ENCODE measurements at regions of chr9 and their contacts with region 1.

Region 1: GRCh38 chr9:78035383-78035993 is 3.9 kb upstream of the GNAQ start:
- DNase-seq: peak; percentile 69
- H3K4me3 Mint-ChIP-seq: peak overlapping the region; percentile 34
- H3K27ac Mint-ChIP-seq: no peak overlapping the region
- H3K4me1 Mint-ChIP-seq: peaks cover 28% of the 10 kb centered on the region
- H3K27me3 Mint-ChIP-seq: no peaks in the 10 kb centered on the region

Region 2: DNA sequence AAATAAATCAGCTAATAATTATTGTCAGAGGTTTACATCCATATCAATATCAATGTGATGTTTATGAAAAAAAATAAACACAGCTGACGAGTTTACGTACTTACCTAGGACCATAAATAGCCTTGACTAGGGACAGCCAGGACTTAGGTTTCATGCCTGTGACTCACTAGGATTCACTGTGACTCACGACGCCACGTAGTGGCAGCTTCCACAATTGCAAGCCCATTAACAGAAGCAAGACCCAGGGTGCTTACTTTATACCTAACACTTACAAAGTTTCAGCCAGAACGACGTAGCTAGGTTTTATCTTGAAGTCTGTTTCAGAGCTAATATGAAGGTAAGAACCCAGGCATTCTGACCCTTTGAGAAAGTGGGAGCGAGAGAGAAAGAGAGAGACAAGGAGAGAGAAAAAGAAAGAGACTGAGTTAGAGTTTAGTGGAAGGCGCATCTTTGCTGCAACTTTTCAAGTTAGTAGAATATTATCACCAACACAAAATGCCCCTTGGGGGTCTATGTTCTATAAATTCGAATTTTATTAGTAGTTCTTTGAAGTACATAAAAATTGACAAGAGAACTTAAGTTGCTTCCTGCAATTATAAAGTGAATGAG is 578.6 kb before region 1 on chr9:
- CTCF ChIA-PET with region 1: interaction called, 8 read pairs
- intact Hi-C with region 1: loop called (anchors 1 kb)
- DNase-seq: peak; percentile 93
- H3K4me3 Mint-ChIP-seq: no peak overlapping the region
- H3K27ac Mint-ChIP-seq: no peak overlapping the region
- H3K4me1 Mint-ChIP-seq: peaks cover 24% of the 10 kb centered on the region
- H3K27me3 Mint-ChIP-seq: no peaks in the 10 kb centered on the region

Region 3: DNA sequence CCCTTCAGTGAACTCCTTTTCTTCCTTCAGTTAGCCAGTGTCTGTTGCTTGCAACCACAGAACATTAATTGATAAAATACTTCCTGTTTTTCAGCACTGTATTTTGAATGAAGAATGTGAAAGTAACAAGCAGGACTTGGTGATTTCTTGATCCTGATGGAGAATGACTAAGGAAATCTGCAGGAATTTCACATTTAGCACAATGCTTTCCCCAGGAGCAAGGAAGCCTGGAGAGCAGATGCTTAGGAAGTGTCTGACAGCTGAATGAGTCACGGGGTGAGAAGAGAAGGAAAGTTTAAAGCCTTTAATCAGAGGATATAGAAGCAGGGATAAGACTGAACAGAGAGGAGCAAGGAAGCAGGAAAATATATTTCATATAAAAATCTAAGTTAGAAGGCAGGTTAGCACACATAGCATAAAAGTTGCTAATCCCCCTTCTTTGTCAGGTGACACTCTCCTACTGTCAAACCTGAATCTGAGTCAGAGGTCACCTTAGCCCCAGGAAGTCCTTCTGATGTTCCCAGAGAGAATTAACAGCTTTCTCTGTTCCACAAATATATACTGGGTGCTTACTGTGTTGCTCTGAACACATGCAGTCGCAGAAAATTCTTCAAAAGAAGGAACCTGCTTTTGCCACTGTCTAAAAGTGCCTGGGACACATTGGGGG is 447.1 kb before region 1 on chr9:
- CTCF ChIA-PET with region 1: no interaction called
- intact Hi-C with region 1: no loop called
- DNase-seq: no peak
- H3K4me3 Mint-ChIP-seq: no peak overlapping the region
- H3K27ac Mint-ChIP-seq: no peak overlapping the region
- H3K4me1 Mint-ChIP-seq: no peaks in the 10 kb centered on the region
- H3K27me3 Mint-ChIP-seq: peaks cover 8% of the 10 kb centered on the region

Region 4: DNA sequence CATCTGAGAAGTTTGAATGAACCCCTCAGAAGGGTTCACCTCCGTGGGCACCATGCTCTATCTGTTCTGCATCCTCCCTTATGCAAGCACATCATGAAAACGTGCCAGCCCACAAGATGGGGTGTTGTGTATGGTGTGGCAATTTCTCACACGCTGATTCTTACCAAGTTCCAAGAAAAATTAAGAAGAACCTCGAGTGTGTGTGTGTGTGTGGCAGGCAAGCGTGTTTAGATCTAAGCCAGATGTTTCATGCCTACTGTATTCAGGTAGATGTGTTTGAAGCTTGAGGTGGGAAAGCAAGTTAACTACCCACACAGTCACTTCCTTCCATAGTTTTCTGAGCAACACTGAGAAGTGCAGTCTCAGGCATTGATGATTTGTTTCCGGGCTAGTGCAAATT is 309.7 kb before region 1 on chr9:
- CTCF ChIA-PET with region 1: no interaction called
- intact Hi-C with region 1: loop called (anchors 5 kb)
- DNase-seq: peak; percentile 59
- H3K4me3 Mint-ChIP-seq: no peak overlapping the region
- H3K27ac Mint-ChIP-seq: peak overlapping the region; percentile 57
- H3K4me1 Mint-ChIP-seq: peaks cover 49% of the 10 kb centered on the region
- H3K27me3 Mint-ChIP-seq: no peaks in the 10 kb centered on the region

Region 5: GRCh38 chr9:77909306-77909705 is 126.2 kb before region 1 on chr9:
- CTCF ChIA-PET with region 1: interaction called, 4 read pairs
- intact Hi-C with region 1: loop called (anchors 2 kb)
- DNase-seq: peak; percentile 35
- H3K4me3 Mint-ChIP-seq: peak overlapping the region; percentile 45
- H3K27ac Mint-ChIP-seq: peak overlapping the region; percentile 80
- H3K4me1 Mint-ChIP-seq: peaks cover 50% of the 10 kb centered on the region
- H3K27me3 Mint-ChIP-seq: no peaks in the 10 kb centered on the region

Region 6: DNA sequence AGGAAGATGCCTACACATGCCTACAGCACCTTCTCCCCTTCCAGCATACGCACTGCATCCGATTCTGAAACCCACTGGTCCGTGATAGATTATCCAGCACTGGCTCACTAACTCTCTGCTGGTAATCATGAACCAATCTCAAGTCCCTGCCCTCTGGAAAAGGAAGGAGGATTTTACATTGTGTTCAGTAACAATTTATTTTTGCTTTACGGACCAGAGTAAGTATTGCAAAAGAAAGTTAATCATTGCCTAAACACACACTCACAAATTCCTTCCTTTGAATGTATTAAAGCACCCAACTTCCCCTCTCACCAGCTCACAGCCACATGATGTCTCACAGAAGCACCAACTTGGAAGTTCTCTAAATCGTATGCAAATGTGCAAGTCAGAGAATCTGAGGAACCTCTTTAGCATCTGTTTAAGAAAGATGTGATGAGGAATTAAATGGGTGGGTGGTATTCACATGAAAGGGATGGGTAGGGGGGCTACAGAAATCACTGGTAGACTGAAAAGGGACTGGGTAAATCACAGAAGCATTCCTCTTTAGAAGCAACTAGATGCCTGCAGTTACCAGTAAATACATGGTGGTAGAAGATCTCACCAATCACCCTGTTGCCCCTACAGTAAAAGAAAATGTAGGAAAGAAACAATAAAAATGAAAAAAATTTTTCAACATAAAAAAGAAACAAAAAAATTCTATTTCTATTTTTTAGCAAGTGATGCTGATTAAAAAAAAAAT is 12.3 kb before region 1 on chr9:
- CTCF ChIA-PET with region 1: interaction called, 12 read pairs
- intact Hi-C with region 1: loop called (anchors 1 kb)
- DNase-seq: peak; percentile 34
- H3K4me3 Mint-ChIP-seq: peak overlapping the region; percentile 4
- H3K27ac Mint-ChIP-seq: no peak overlapping the region
- H3K4me1 Mint-ChIP-seq: peaks cover 65% of the 10 kb centered on the region
- H3K27me3 Mint-ChIP-seq: no peaks in the 10 kb centered on the region

Region 7: GRCh38 chr9:78187763-78188484 is 152.4 kb after region 1 on chr9:
- CTCF ChIA-PET with region 1: no interaction called
- intact Hi-C with region 1: no loop called
- DNase-seq: no peak
- H3K4me3 Mint-ChIP-seq: no peak overlapping the region
- H3K27ac Mint-ChIP-seq: no peak overlapping the region
- H3K4me1 Mint-ChIP-seq: no peaks in the 10 kb centered on the region
- H3K27me3 Mint-ChIP-seq: no peaks in the 10 kb centered on the region

Region 8: DNA sequence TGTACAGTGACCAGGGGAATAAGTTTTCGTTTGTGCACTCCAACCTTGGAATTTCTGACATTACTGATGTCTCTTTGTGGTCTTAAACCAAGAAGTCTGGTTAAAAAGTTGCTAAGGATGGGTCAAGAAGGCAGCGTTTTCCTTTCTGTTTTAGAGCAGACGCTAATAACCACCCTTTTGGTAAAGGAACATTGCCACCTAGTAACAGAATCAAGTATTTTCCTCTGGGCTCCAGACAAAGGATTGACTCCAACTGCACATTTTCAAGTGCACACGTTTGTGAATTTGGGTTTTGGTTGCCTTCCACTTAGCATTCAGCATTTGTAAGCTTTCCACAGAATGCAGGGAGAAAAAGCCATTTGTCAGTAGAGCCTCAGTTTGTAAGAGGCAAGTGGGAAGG is 178.2 kb after region 1 on chr9:
- CTCF ChIA-PET with region 1: interaction called, 3 read pairs
- intact Hi-C with region 1: loop called (anchors 1 kb)
- DNase-seq: no peak
- H3K4me3 Mint-ChIP-seq: no peak overlapping the region
- H3K27ac Mint-ChIP-seq: no peak overlapping the region
- H3K4me1 Mint-ChIP-seq: peaks cover 31% of the 10 kb centered on the region
- H3K27me3 Mint-ChIP-seq: no peaks in the 10 kb centered on the region